CD14-positive monocyte (primary cell): ENCODE measurements at regions of chr16 and their contacts with region 1.

Region 1: GRCh38 chr16:23556881-23557778 is at the starts of genes EARS2 and UBFD1:
- DNase-seq: peak; percentile 96 to 98 (median 97)
- H3K4me3 ChIP-seq: peak within 1 kb of the TSS; percentile 59 to 87 (median 70)
- H3K4me3 Mint-ChIP-seq: peak within 1 kb of the TSS; percentile 87 to 88
- H3K27ac ChIP-seq: peak within 1 kb of the TSS; percentile 47 to 82
- H3K27ac Mint-ChIP-seq: peak within 1 kb of the TSS; percentile 87 to 95 (median 91)
- H3K4me1 ChIP-seq: peaks cover 15 to 22% of the 10 kb centered on the region in 2 donors
- H3K4me1 Mint-ChIP-seq: peaks cover 21% of the 10 kb centered on the region
- H3K27me3 ChIP-seq: no peaks in the 10 kb centered on the region
- H3K27me3 Mint-ChIP-seq: peaks cover 0 to 2% (median 0%) of the 10 kb centered on the region in 3 donors
- CTCF ChIP-seq: peak; percentile 96
- polyA plus RNA-seq, gene EARS2: 2.9 to 4.7 (median 4.2) TPM
- polyA plus RNA-seq, gene UBFD1: 8.0 to 8.9 (median 8.0) TPM

Region 2: GRCh38 chr16:23452572-23453337 is 104.4 kb before region 1 on chr16 and contains the start of gene COG7:
- intact Hi-C with region 1: loop called in 1 of 2 experiments (anchors 5 kb)
- DNase-seq: peak; percentile 64 to 77 (median 70)
- H3K4me3 ChIP-seq: peak within 1 kb of the TSS; percentile 68 to 98 (median 97)
- H3K4me3 Mint-ChIP-seq: peak within 1 kb of the TSS; percentile 91 to 95
- H3K27ac ChIP-seq: peak within 1 kb of the TSS; percentile 32 to 78
- H3K27ac Mint-ChIP-seq: peak within 1 kb of the TSS; percentile 76 to 93 (median 88)
- H3K4me1 ChIP-seq: peaks cover 11 to 15% of the 10 kb centered on the region in 2 donors
- H3K4me1 Mint-ChIP-seq: peaks cover 24% of the 10 kb centered on the region
- H3K27me3 ChIP-seq: no peaks in the 10 kb centered on the region
- H3K27me3 Mint-ChIP-seq: peaks cover 0 to 4% (median 0%) of the 10 kb centered on the region in 3 donors
- CTCF ChIP-seq: no peak
- polyA plus RNA-seq, gene COG7: 6.6 to 28.8 (median 8.0) TPM

Region 3: DNA sequence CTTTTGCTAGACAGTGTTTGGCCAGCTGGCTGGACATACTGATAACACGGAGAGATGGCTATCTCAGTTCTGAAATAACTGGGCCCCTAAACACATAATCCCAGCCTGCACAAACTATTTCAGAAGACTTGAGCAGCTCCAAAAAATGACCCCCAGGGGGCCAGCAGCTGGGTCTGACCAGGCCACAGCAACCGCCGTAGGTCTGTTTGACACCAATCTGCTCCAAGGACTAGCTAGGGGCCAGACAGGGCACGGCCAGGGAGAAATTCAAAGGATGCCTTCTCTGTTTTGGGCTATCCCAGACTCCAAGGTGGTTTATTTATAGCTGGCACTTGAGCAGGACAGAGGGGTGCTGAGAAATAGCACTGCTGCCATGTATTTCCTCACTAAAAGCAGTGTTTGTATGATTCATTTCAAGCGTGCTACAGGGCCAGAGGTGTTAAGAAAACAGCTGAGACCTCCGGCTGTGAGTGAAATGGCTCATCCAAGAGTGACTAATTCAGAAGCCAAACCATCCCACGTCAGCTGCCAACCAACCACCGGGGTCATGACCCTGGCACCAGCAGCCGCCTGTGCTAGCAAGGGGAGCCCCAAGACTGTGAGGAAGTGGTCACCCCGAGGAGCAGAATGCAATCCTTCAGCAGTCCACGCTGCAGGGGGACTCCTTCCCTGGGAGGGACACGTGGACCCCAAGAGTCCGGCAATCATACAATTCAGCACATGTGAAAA is 52.5 kb before region 1 on chr16:
- intact Hi-C with region 1: loop called in 1 of 2 experiments (anchors 2 kb)
- DNase-seq: peak; percentile 95 to 98 (median 97)
- H3K4me3 ChIP-seq: peak overlapping the region in 1 of 3 experiments; percentile 8
- H3K4me3 Mint-ChIP-seq: peak overlapping the region; percentile 70 to 72
- H3K27ac ChIP-seq: peak overlapping the region; percentile 89 to 91
- H3K27ac Mint-ChIP-seq: peak overlapping the region; percentile 88 to 99 (median 96)
- H3K4me1 ChIP-seq: peaks cover 89 to 94% of the 10 kb centered on the region in 2 donors
- H3K4me1 Mint-ChIP-seq: peaks cover 84% of the 10 kb centered on the region
- H3K27me3 ChIP-seq: no peaks in the 10 kb centered on the region
- H3K27me3 Mint-ChIP-seq: peaks cover 0 to 2% (median 0%) of the 10 kb centered on the region in 3 donors
- CTCF ChIP-seq: peak; percentile 30

Region 4: DNA sequence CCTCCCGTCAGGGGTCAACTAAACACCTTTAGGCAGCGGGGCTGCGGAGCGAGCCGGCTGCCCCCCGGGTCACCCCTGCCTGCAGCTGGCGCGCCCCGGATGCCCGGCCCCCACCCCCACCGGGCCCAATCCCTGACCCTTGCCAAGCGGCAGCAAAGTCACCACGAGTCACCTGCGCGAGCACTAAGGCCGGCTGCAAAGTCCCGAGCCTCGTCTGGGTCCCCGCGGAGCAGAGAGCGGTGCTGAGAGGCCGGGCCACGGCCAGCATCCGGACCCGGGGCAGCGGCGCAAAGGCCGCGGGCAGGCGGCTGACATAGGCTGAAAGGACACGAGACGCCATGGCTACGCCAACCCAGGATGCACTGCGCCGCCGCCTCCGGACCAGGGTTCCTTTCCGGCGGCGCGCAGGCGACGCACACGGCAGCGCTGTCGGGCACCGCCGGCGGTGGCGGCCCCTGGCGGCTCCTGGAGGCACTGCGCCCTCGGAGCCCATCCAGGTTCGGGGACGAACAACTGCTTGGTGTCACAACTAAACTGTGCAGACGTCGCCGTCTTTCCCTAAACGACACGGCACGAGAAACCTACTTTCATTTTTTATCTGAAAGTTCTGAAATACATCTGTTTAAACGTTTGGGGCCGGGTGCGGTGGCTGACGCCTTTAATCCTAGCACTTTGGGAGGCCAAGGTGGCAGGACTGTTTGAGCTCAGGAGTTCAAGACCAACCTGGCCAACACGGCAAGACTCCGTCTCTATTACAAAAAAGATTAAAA is 39.0 kb after region 1 on chr16 and contains the start of gene NDUFAB1:
- intact Hi-C with region 1: loop called (anchors 1 to 2 kb)
- DNase-seq: peak; percentile 84 to 88 (median 86)
- H3K4me3 ChIP-seq: peak within 1 kb of the TSS; percentile 79 to 97 (median 93)
- H3K4me3 Mint-ChIP-seq: peak within 1 kb of the TSS; percentile 84 to 86
- H3K27ac ChIP-seq: peak within 1 kb of the TSS; percentile 48 to 85
- H3K27ac Mint-ChIP-seq: peak within 1 kb of the TSS; percentile 71 to 86 (median 82)
- H3K4me1 ChIP-seq: peaks cover 16% of the 10 kb centered on the region in 2 donors
- H3K4me1 Mint-ChIP-seq: peaks cover 15% of the 10 kb centered on the region
- H3K27me3 ChIP-seq: no peaks in the 10 kb centered on the region
- H3K27me3 Mint-ChIP-seq: no peaks in the 10 kb centered on the region
- CTCF ChIP-seq: peak; percentile 98
- polyA plus RNA-seq, gene NDUFAB1: 50.2 to 257 (median 240) TPM